Cardiac septum (tissue), 1 donor: ENCODE measurements at regions of chr11 and their contacts with region 1.

Region 1: GRCh38 chr11:96306933-96307775 is 35.8 kb downstream of the MAML2 start:
- DNase-seq: no peak

Region 2: DNA sequence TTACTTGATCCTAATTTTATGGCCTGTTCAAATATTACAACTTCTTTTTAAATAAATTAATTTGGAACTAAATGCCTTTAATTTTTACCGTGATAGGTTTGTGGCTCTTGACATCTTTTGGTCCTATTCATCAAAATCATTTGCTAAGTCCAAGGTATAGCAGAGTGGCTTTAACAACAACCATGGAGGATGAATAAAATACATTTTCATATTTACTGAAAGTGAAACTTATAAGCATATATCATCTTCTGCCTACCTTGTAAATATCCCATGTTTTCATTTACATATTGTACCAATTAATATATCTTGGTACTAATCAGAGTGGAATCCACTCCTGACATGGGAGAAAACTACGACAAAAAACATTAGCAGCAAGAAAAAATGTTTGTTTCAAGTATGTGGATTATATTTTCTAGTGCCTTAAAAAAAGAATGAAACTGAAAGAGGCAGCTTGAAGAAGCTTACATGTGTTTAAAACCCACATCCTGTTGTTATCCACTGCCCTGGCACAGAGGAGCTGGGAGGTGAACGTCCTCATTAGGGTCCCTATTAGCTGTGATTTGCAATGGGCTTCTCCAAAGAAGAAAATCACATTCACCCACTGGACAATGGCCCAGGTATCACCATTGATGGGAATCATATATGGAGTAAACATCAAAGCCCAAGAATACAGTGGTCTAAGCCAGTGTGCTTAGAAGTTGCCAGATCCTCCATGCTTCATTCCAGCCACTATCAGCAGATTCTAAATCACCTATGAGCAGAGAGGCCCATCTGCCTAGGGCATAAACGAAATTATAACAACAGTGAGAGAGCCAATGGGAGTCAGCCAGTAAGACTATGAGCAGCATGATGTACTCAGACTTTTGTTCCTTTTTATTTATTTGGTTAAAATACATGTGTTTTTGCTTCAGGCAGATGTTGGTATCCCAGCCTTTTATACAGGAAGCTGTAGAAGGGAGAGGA is 48.9 kb before region 1 on chr11:
- intact Hi-C with region 1: loop called (anchors 5 kb)
- DNase-seq: no peak

Region 3: GRCh38 chr11:96272529-96273222 is 34.5 kb before region 1 on chr11:
- intact Hi-C with region 1: no loop called
- DNase-seq: no peak